MCF 10A (cell line): ENCODE measurements at regions of chr16 and their contacts with region 1.

Region 1: GRCh38 chr16:30445408-30446202 is at the start of gene SEPHS2:
- DNase-seq: peak; percentile 99
- H3K4me3 Mint-ChIP-seq: peak within 1 kb of the TSS; percentile 80
- H3K27ac Mint-ChIP-seq: peak within 1 kb of the TSS; percentile 90
- H3K4me1 Mint-ChIP-seq: peaks cover 17% of the 10 kb centered on the region
- H3K27me3 Mint-ChIP-seq: no peaks in the 10 kb centered on the region
- CTCF ChIP-seq: peak; percentile 11
- total RNA-seq, gene SEPHS2: 51.9 and 73.3 TPM in 2 replicates

Region 2: DNA sequence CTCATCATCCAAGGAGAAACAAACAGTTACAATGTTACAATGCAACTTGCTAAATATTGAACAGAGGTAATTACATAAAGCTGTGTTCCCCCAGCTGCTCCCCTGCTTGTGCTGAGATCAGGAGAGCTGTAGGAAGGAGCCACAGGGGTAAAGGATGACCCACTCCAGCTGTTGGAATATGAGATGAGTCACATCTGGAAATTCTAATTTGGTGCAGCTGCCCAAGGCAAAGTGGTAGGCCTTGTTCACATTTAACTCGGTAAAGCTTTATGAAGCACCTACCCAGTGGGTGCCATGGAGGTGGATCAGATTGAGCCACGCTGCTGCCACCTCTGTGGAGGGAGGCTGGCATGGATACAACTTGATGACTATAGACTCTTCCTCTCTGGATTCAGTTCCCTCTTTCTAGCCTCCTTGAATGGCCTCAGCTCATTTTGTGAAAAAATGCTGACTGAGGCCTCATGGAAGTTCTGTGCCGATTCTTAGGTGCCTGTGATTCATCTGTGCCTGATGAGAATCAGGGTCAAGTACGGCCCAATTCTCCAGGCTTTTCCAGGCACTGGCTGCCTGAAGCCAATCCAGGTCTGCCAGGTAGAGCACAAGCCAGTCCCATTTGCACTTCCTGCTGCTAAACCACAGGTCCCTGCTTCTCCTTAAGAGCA is 157.1 kb after region 1 on chr16:
- CTCF ChIA-PET with region 1: interaction called, 5 read pairs
- POLR2A ChIA-PET with region 1: no interaction called
- intact Hi-C with region 1: loop called (anchors 1 kb)
- DNase-seq: no peak
- H3K4me3 Mint-ChIP-seq: no peak overlapping the region
- H3K27ac Mint-ChIP-seq: no peak overlapping the region
- H3K4me1 Mint-ChIP-seq: no peaks in the 10 kb centered on the region
- H3K27me3 Mint-ChIP-seq: no peaks in the 10 kb centered on the region
- CTCF ChIP-seq: no peak

Region 3: GRCh38 chr16:30805370-30806169 is 360.0 kb after region 1 on chr16:
- CTCF ChIA-PET with region 1: no interaction called
- POLR2A ChIA-PET with region 1: no interaction called
- intact Hi-C with region 1: no loop called
- DNase-seq: peak; percentile 81
- H3K4me3 Mint-ChIP-seq: peak overlapping the region; percentile 85
- H3K27ac Mint-ChIP-seq: peak overlapping the region; percentile 82
- H3K4me1 Mint-ChIP-seq: peaks cover 10% of the 10 kb centered on the region
- H3K27me3 Mint-ChIP-seq: no peaks in the 10 kb centered on the region
- CTCF ChIP-seq: no peak